Activated CD8-positive, alpha-beta memory T cell treated with anti-CD3 and anti-CD28 coated beads, Interleukin-2, amount 10 ng/mL, durations not matched to agents 7 days and 5 days (primary cell): ENCODE measurements at regions of chr1 and their contacts with region 1.

Region 1: DNA sequence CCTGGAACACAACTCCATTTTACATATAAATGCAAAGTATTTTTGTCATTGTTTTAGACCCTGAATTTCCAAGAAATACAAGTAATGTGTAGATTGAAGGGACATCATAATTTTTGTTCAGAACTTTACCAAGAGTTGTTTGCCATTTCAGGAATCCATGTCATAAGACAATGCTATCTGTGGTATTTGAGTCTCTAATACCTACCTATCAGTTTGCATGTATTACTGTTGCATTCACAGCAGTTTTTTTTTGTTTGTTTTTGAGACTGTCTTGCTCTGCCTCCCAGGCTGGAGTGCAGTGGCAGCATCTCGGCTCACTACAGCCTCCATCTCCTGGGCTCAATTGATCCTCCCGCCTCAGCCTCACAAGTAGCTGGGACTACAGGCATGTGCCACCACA is 17.1 kb downstream of the MPZ start:
- DNase-seq: no peak
- ATAC-seq: no peak
- H3K4me3 Mint-ChIP-seq: no peak overlapping the region
- H3K27ac Mint-ChIP-seq: no peak overlapping the region
- H3K4me1 Mint-ChIP-seq: peaks cover 4% of the 10 kb centered on the region
- H3K27me3 Mint-ChIP-seq: no peaks in the 10 kb centered on the region

Region 2: DNA sequence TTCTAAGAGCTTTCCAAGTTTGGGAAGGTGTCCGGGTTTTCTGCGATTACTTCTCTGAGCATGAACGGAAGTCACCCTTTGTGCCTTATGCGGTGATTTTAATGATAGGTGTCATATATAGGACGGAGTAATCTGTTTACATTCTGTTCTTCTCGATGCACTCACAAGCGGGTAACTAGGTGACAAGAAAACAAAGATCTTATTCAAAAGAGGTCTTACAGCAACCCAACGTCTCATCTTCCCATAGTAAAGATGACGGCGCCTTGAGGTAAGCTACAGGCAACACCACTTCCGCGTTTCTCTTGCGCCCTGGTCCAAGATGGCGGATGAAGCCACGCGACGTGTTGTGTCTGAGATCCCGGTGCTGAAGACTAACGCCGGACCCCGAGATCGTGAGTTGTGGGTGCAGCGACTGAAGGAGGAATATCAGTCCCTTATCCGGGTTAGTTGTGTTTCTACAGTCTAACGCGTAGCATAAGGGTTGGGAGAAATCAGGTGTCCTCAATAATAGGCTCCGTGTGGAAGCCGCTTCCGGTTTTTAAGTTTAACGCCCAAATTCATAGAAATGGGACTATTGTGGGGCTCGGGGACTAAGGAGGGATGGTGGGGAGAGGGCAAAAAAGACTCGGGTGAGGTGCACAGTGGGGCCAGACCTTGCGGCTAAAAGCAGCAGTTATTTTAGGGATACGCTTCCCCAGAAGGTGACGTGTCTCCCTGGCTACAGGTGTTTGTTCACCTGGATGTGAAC is 138.8 kb before region 1 on chr1 and contains the start of gene UFC1:
- CTCF ChIA-PET with region 1: no interaction called
- DNase-seq: peak; percentile 92
- ATAC-seq: peak; percentile 95
- H3K4me3 Mint-ChIP-seq: peak within 1 kb of the TSS; percentile 99
- H3K27ac Mint-ChIP-seq: peak within 1 kb of the TSS; percentile 100
- H3K4me1 Mint-ChIP-seq: peaks cover 24% of the 10 kb centered on the region
- H3K27me3 Mint-ChIP-seq: no peaks in the 10 kb centered on the region
- total RNA-seq, gene UFC1: 90.7 to 98.4 TPM

Region 3: DNA sequence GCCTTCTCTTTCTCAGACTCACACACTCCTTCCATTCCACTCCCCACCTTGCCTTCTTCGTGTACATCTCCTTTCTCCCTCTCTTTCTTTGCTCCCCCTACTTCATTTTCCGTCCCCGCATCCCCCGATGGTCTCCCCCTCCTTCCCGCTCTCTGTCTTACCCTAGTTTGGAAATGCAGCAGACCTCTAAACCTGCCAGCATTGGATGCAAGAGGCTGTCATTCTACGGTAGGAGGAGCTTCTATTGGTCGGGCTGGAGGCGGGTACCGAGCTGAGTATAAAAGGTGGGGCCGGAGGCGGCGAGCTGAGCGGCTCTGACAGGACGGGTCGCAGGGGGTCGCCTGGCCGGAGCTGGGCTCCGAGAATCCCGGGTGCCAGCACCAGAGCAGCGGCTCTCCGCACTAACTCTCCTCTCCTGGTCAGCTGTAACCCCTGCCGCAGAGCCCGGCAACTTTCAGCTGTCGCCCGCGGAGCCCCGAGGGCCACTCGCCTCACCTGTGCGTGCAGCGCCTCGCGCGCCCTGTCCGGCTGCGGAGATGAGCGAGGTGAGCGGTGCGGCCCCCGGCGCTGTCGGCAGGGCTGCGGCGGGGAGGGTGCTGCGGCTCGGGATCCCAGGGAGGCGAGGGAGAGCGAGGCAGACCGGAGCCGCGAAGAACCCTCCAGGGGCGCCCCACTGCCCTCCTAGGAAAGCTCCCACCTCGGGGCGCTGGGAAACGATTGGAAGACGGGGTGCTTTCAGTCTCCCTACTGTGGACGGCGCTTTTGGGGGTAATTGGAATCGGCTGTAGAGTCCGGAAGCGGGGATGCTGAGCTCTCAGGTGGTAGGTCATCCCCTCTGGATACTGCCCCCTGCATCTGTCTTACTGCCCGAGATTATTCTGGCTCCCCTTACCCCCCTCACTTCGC is 33.9 kb before region 1 on chr1 and contains the start of gene PCP4L1:
- CTCF ChIA-PET with region 1: interaction called, 23 read pairs
- DNase-seq: peak; percentile 60
- ATAC-seq: peak; percentile 90
- H3K4me3 Mint-ChIP-seq: peak within 1 kb of the TSS; percentile 53
- H3K27ac Mint-ChIP-seq: no peak within 1 kb of the TSS
- H3K4me1 Mint-ChIP-seq: peaks cover 14% of the 10 kb centered on the region
- H3K27me3 Mint-ChIP-seq: peaks cover 60% of the 10 kb centered on the region
- total RNA-seq, gene PCP4L1: not detected

Region 4: GRCh38 chr1:161473363-161473762 is 180.7 kb after region 1 on chr1:
- CTCF ChIA-PET with region 1: no interaction called
- DNase-seq: peak; percentile 48
- ATAC-seq: no peak
- H3K4me3 Mint-ChIP-seq: peak overlapping the region; percentile 24
- H3K27ac Mint-ChIP-seq: no peak overlapping the region
- H3K4me1 Mint-ChIP-seq: peaks cover 8% of the 10 kb centered on the region
- H3K27me3 Mint-ChIP-seq: peaks cover 35% of the 10 kb centered on the region